CD4-positive, alpha-beta T cell (primary cell): ENCODE measurements at regions of chr18 and their contacts with region 1.

Region 1: GRCh38 chr18:25125680-25126079 is 226.3 kb downstream of the ZNF521 start:
- DNase-seq: no peak
- ATAC-seq: no peak
- H3K4me3 ChIP-seq: no peak overlapping the region
- H3K4me3 Mint-ChIP-seq: no peak overlapping the region
- H3K27ac ChIP-seq: no peak overlapping the region
- H3K27ac Mint-ChIP-seq: no peak overlapping the region
- H3K4me1 ChIP-seq: no peaks in the 10 kb centered on the region
- H3K4me1 Mint-ChIP-seq: no peaks in the 10 kb centered on the region
- H3K27me3 ChIP-seq: no peaks in the 10 kb centered on the region
- H3K27me3 Mint-ChIP-seq: peaks cover 4% of the 10 kb centered on the region
- CTCF ChIP-seq: no peak

Region 2: DNA sequence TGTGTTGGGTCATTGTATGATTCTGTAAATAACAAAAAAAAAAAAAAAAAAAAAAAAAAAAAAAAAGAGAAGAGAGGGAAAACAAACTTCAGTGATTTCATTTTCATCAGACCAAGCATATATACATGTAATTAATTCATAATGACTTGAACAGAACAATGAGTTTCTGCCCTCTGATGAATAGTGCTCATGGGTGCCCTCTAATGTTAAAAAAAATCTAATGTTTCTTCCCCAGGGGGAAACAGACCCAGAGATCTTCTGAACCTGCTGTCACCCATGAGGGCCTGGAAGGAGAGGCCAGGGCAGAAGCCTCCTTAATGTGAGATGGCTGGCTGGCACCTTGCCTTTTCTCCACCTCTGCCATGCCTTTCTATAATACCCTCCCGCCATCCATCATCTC is 63.0 kb before region 1 on chr18:
- CTCF ChIA-PET with region 1: no interaction called
- POLR2A ChIA-PET with region 1: no interaction called
- intact Hi-C with region 1: loop called in 1 of 2 experiments (anchors 10 kb)
- DNase-seq: no peak
- ATAC-seq: no peak
- H3K4me3 ChIP-seq: no peak overlapping the region
- H3K4me3 Mint-ChIP-seq: no peak overlapping the region
- H3K27ac ChIP-seq: no peak overlapping the region
- H3K27ac Mint-ChIP-seq: no peak overlapping the region
- H3K4me1 ChIP-seq: no peaks in the 10 kb centered on the region
- H3K4me1 Mint-ChIP-seq: no peaks in the 10 kb centered on the region
- H3K27me3 ChIP-seq: no peaks in the 10 kb centered on the region
- H3K27me3 Mint-ChIP-seq: no peaks in the 10 kb centered on the region
- CTCF ChIP-seq: no peak